Activated CD4-positive, alpha-beta memory T cell treated with anti-CD3 and anti-CD28 coated beads, Interleukin-2, amount 10 ng/mL, durations not matched to agents 7 days and 5 days (primary cell): ENCODE measurements at regions of chr9 and their contacts with region 1.

Region 1: DNA sequence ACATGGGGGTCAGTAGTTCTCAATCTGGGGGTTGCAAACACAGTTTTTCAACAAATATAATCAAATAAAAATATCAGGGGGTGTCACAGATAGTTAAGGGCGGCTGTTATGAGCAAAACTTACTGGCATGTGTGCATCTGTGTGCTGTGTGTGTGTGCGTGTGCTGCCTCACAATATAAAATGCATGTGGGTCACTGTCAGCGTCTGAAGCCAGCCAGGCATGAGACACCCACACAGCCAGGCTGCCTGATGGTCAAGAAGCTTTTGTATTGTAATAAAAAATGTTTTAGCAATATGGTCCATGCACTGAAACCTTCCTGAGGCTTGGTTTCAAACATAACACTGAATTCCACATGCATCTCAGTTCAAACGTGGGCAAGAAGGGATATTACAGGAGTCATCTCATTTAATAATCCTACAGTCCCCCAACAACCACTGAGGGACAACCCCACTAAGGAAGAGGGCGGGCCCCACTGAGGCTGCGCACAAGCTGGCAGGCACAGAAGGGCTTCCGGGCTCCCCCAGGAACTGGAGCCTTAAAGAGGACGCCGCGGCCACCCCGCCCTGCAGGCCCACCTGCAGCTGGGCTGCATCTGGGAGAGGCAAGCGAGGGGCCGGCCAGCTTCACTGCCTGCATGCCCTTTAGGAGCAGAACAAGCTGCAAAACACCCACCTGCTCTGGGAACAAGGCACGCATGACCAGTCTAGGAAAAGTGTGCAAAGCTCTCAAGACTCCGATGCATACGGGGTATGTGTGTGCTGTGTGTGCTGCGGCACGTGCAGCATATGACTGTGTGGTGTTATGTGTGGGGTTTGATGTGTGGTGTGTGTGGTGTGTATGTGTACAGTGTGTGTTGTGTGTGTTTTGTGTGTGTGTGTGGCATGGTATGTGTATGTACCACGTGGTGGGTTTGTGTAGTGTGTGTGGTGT is 14.1 kb downstream of the SEMA4D start:
- DNase-seq: peak; percentile 67
- H3K4me3 Mint-ChIP-seq: peak overlapping the region; percentile 80
- H3K27ac Mint-ChIP-seq: peak overlapping the region; percentile 89
- H3K4me1 Mint-ChIP-seq: peaks cover 90% of the 10 kb centered on the region
- H3K27me3 Mint-ChIP-seq: no peaks in the 10 kb centered on the region

Region 2: DNA sequence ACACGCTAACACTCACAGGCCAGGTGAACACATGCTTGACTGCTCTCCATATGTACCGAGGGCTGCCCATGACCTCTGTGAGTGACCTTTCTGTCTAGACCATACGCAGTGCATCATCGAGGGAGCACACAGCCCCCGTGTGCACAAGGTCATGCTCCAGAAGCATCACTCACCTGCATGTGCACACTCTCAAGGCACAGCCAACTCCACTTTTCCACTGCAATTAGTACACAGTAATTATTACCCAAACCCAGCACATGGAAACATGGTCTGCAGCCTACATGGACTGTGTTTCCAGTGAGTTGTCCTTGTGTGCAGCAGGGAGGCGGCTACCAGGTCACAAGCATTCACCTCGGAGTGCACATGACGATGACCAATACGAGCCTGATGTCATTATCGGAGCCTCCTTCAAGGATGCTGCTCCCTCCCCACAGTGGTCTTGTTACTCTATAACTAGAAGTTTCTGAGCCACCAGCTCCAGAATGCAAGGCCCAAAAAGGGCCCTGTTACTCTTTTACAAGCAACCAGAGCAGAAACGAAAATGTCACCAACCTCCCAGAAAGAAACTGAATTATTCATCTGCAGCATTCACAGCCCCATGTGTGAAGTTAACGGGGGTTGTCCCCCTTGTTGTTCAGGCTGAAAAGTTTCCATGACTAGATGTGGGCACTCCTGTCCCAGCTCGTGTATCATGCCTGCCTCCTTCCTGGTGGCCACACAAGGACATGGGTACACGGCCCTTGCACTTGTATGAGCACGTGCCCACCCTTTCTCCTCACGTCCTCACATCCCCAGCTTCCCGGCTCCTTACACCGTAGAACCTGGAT is 17.2 kb before region 1 on chr9:
- CTCF ChIA-PET with region 1: interaction called, 4 read pairs
- POLR2A ChIA-PET with region 1: interaction called, 14 read pairs
- DNase-seq: no peak
- H3K4me3 Mint-ChIP-seq: peak overlapping the region; percentile 40
- H3K27ac Mint-ChIP-seq: peak overlapping the region; percentile 80
- H3K4me1 Mint-ChIP-seq: peaks cover 96% of the 10 kb centered on the region
- H3K27me3 Mint-ChIP-seq: no peaks in the 10 kb centered on the region